ENCODE measurements at regions of chr4 and their contacts with region 1.

Region 1: DNA sequence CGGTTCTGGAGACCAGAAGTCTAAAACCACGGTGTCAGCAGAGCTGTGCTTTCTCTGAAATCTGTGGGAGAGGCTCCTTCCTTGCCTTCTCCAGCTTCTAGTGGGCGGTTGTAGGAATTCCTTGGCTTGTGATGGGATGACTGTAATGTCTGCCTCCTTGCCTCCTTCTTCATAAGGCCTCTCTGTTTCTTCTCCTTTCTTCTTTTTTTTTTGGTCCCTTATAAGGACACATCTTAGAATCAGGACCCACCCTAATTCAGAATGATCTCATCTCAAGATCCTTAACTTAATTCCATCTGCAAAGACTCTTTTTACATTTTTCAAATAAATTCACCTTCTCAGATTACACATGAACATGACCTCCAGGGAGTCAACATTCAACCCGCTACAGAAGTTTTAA is 186.9 kb downstream of the STK32B start:
- DNase-seq: no peak
- ATAC-seq: no peak
- H3K4me3 ChIP-seq: no peak overlapping the region
- H3K27ac ChIP-seq: no peak overlapping the region
- H3K4me1 ChIP-seq: no peaks in the 10 kb centered on the region
- H3K27me3 ChIP-seq: no peaks in the 10 kb centered on the region; a peak in 1 of 5 replicates
- CTCF ChIP-seq: no peak
- EP300 ChIP-seq: no peak
- POLR2A ChIP-seq: no peak
- RAD21 ChIP-seq: no peak

Region 2: GRCh38 chr4:5256421-5256820 is 18.2 kb after region 1 on chr4:
- CTCF ChIA-PET with region 1: no interaction called
- POLR2A ChIA-PET with region 1: no interaction called
- in situ Hi-C with region 1: no loop called
- intact Hi-C with region 1: loop called (anchors 1 kb)
- DNase-seq: no peak
- ATAC-seq: no peak
- H3K4me3 ChIP-seq: no peak overlapping the region
- H3K27ac ChIP-seq: no peak overlapping the region
- H3K4me1 ChIP-seq: no peaks in the 10 kb centered on the region
- H3K27me3 ChIP-seq: no peaks in the 10 kb centered on the region
- CTCF ChIP-seq: no peak
- EP300 ChIP-seq: no peak
- POLR2A ChIP-seq: no peak
- RAD21 ChIP-seq: no peak